ENCODE measurements at regions of chr11 and their contacts with region 1.

Region 1: DNA sequence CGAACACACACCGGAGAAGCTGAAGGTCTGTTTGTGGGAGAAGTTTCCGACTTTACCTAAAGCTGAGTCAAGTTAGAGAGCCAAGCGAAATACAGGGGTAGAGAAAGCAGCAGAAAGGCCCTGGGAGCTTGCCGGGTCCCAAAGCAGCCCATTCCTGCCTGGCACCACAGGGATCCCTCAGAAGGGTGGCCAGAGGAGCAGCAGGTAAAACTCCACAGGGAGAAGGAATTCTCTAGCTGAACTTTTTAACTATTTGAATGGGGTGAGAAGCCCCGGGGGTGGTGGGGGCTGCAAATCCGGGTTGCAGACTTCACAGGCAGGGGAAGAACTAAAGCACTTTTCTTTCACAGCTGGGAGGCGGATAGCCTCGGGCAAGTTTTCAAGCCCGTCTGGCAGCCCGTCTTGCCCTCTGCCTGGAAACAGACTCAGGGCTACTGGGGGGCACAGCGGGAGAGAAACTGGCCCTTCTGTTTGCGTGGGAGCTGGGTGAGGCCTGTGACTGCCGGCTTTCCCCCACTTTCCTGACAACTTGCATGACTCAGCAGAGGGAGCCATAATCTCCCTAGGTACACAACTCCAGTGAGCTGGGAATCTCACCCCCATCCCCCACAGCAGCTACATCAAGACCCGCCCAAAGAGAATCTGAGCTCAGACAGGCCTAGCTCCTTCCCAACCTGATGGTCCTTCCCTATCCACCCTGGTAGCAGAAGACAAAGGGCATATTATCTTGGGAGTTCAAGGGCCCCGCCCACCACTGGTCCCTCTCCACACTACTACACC is 311.0 kb downstream of the SBF2 start:
- DNase-seq: peak; percentile 62
- H3K4me3 ChIP-seq: no peak overlapping the region
- H3K27ac ChIP-seq: no peak overlapping the region
- H3K4me1 ChIP-seq: no peaks in the 10 kb centered on the region
- H3K27me3 ChIP-seq: no peaks in the 10 kb centered on the region
- CTCF ChIP-seq: no peak

Region 2: GRCh38 chr11:10322830-10323792 is 340.1 kb after region 1 on chr11:
- intact Hi-C with region 1: loop called (anchors 10 kb)
- DNase-seq: peak; percentile 79
- H3K4me3 ChIP-seq: no peak overlapping the region
- H3K27ac ChIP-seq: peak overlapping the region; percentile 58
- H3K4me1 ChIP-seq: peaks cover 10% of the 10 kb centered on the region
- H3K27me3 ChIP-seq: no peaks in the 10 kb centered on the region
- CTCF ChIP-seq: peak; percentile 45